ENCODE measurements at regions of chr6 and their contacts with region 1.

Region 1: DNA sequence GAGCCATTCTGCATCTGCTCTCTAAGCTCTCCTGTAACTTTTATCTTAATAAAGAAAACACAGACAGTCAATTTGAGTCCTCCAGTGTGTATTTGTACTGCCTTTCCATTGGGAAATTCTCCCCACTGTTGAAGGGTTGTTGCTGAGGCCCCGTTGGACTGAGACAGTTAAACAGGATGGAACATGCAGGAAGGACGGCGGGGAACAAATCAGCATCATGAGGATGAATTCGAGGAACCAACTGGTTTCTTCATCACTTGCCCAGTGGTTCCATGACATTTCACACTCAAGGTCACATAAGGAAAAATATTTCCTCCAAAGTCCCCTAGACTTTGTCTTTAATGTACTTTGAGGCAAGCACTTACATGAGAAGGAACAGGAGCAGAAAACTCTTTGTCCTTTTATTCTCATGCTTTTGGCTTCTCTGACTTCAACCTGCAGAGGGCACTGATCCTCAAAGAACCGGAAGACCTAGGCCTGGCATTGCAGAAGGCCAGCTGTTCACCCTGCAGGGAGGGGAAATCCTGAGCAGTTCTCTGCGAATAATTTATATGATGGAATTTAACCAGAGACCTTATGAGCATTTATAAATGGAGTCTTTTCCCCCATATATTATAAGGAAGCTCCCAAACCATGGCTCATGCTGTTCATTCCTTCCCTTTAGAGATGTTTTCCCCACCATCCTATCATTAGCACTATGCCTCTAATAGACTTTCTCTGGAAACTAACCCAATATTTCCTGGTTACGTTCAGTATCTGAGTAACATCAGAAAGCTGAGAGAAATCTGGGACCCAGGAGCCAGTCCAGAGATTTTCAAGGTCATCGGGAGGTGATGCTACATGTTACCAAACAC is 55.2 kb upstream of the ADGRF1 start:
- DNase-seq: peak; percentile 61
- CTCF ChIP-seq: peak; percentile 44

Region 2: DNA sequence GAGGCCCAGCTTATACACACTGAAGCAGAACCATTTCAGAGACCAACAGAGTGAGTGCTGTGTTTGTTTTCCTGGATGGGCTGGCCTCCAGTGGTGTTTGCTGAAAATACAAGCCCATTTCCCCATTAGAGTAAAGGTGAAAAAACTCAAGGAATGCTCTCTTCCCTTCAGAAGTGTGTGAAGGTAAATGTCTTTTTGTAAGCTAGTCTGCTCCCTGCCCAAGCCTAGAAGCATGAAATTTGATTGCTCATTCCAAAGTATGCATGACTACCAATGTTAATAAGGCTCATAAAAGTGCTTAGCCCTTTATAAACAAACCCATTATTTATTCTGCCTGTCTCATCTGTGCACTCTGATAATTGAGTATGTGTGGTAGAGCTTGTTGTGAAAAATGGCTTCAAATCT is 114.3 kb before region 1 on chr6:
- in situ Hi-C with region 1: no loop called
- DNase-seq: no peak
- CTCF ChIP-seq: no peak

Region 3: GRCh38 chr6:47302043-47302442 is 204.7 kb after region 1 on chr6:
- in situ Hi-C with region 1: loop called (anchors 5 kb)
- DNase-seq: no peak
- CTCF ChIP-seq: no peak

Measured in GM13976 (cell line).